Right ventricle myocardium inferior (tissue), 1 donor: ENCODE measurements at regions of chrX and their contacts with region 1.

Region 1: GRCh38 chrX:2283111-2284067 is 217.4 kb downstream of the DHRSX start:
- DNase-seq: no peak
- ATAC-seq: no peak

Region 2: DNA sequence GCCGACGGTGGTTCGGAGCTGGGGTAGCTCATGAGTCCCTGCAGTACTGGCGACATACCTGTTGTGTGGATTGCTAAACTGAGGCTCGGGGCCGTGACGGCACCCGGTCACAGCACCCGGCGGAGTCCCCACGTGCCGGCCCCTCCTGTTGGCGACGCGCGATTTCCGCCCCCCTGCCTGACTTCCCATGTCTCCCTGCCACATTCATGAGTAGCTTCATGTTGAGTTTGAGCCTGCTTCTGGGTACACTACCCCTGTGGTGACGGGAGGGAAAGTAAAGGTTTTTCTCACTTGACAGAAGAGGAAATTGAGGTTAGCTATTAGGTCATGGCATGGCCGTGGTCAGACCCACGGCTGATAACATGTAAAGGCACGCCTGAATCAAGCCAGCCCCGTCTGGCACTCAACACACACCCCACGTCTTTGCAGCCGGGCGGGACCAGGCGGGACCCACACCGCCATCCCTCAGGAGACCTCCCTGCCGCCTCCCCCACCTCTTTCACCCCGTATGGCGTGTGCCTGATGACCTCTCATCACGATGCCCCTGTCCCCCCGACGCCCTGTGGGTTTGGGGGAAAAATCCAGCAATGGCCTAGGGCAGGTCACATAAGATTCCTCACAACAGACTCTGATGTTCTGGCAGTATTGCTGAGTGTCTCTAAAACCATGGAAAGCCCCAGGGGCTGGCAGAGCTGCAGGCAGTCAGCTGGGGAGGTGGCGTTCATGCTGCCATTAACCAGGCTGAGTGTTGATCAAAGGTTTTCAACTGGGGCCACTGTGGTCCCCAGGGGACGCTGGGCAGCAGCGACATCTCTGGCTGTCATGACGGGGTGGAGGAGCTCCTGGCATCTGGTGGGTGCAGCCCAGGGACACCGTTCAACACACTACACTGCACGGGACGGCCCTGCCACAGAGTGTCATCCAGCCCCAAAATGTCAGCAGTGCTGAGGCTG is 775.6 kb before region 1 on chrX:
- intact Hi-C with region 1: no loop called
- DNase-seq: no peak
- ATAC-seq: no peak

Region 3: DNA sequence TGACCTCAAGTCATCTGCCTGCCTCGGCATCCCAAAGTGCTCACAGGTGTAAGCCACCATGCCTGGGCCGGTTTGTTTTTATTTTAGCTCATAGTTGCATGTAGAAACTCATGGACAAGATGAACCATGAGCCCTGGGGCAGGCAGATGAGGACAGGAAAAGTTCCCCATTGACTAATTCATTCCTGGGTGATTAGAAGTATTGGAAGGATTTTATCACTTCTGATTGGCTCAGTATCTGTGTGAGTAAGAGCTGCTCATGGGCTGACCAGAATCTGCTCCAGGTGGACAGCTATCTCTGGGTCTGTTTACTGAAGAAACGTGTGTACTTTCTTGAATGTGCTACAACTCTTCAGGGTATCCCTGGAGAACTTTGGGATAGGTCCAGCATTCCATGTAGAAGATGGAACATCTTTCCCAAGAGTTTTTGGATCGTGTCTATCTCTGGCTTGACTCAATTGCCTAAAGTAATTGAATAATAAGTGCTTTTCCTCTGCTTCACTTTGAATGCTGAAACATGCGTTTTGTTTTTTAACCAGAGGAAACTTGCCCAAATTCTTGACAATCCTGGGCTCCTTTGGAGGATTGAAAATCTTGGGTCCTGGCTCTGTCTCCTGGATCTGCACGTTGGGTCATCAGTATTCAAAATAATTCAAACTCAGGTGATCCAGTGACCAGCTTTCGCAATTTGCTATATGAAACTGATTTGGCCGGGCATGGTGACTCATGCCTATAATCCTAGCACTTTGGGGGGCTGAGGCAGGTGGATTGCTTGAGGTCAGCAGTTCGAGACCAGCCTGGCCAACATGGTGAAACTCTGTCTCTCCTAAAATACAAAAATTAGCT is 306.0 kb after region 1 on chrX:
- intact Hi-C with region 1: loop called (anchors 5 kb)
- DNase-seq: no peak
- ATAC-seq: no peak